ENCODE measurements at regions of chr22 and their contacts with region 1.

Region 1: DNA sequence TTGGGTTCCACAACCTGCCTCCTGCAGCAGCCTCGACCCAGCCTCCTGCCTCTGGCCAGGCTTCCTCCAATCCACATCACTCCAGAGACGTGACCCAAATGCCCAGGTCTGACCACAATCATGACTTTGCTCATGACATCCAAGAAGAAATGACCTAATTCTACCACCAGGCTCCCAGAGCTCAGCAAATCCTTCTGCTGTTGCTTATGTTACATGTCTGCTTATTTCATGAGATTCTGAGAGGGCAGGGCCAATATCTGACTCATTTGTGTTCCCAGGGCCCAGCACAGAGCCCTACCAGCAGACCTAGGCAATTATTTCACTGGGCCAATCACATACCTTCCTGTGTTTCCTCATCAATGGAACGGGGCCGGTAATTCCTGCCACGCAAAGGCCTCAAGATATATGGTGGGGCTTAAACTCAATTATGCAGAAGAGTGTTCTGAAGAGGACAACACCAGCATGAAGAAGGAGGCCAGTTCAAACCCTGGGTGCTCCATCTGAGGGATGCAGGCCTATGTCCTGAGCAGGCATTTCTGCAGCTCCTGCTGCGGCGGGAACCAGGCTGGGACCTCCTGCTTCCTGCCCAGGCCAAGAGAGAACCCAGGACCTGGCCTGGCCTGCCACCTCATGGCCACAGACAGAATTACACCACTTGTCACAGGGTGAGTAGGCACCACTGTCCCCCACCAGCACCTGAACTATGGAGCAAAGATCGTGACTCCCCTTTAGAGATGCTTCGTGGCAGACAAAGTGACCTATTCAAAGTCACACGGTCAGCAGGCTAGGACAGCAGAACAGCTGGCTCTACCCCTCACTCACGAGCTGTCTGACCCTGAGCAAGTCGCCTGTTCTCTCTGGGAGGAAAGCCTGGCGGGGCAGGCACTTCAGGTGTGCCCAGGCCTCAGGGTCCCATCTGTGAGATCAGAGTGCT is 5.9 kb downstream of the CENPM start:
- DNase-seq: peak; percentile 85 to 93 (median 90)
- H3K4me3 ChIP-seq: peak overlapping the region in 3 of 59 donors; percentile 0 to 29 (median 7)
- H3K27ac ChIP-seq: peak overlapping the region in 51 of 59 donors; percentile 2 to 83 (median 59)
- H3K27me3 ChIP-seq: no peaks in the 10 kb centered on the region
- CTCF ChIP-seq: peak; percentile 86 to 99 (median 96)

Region 2: DNA sequence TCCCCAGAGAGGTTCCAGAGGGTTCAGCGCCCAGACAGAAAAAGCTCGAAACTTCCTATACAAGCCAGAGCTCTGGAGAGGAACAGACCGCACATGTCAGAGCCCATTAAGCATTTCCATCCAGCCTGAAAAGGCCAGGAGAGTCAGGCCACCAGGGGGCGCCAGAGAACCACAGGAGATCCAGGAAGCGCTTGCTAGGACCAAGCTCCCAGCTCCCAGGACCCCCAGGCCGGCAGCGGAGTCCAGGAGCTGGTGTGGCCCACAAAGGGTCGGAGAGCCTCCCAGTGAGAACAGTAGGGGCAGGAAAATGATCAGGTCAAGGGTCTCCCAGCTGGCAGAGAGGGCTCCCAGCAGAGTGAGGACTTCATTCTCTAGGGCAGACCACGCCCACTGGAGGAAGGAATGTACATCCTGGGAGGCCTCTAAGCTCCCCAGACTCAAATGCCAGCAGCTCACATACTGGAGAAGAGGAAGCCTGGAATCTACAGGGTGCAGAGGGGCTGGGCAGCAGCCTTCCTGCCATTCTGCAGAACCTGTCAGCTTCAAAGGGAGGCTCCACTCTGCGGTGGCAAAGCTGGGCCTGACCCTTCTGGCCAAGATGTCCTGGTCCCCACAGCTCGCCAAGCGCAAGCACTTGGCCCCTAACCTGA is 243.8 kb before region 1 on chr22:
- intact Hi-C with region 1: loop called (anchors 2 to 5 kb)
- DNase-seq: peak; percentile 85 to 96 (median 92)
- H3K4me3 ChIP-seq: peak overlapping the region in 22 of 59 donors; percentile 4 to 41 (median 29)
- H3K27ac ChIP-seq: peak overlapping the region in 36 of 59 donors; percentile 4 to 82 (median 50)
- H3K27me3 ChIP-seq: no peaks in the 10 kb centered on the region
- CTCF ChIP-seq: peak; percentile 90 to 100 (median 97)

Region 3: GRCh38 chr22:41746567-41747400 is 194.3 kb before region 1 on chr22:
- intact Hi-C with region 1: loop called (anchors 2 to 5 kb)
- DNase-seq: peak; percentile 39 to 85 (median 72)
- H3K4me3 ChIP-seq: no peak overlapping the region
- H3K27ac ChIP-seq: no peak overlapping the region
- H3K27me3 ChIP-seq: peaks cover 0 to 4% (median 0%) of the 10 kb centered on the region in 45 donors
- CTCF ChIP-seq: peak; percentile 38 to 81 (median 68)

Region 4: DNA sequence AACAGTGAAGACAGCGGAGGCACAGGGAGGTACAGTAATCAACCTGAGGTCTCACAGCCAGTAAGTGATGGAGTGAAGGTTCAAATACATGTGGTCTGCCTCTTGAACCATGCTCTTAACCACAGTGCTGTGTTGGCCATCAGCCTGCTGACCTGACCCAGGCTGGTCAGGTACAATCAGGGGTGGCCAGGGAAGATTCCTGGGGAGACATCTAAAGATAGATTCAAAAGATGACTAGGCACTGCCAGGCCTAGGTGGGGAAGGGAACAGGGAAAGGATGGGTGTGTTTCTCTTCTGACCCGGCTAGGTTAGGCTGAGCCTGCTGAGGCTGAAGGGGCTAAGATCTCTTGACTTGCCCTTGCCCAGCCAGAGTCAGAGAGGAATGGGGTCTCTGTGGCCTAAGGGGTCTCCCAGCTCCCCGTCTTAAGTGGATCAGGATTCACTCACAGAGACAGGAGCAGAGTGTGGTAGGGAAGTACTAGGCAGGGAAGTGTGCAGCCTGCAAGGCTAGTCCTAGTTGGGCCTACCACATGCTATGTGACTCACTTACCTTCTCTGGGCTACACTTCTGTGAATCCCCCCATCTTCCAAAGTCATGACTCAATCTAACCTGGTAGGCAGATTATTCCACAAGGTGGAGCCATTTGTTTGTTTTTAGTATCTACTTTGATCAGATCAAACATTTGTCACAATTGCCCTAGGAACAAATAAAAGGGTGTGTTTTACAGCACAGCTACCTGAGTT is 118.6 kb before region 1 on chr22:
- intact Hi-C with region 1: loop called (anchors 1 to 2 kb)
- DNase-seq: no peak
- H3K4me3 ChIP-seq: no peak overlapping the region
- H3K27ac ChIP-seq: no peak overlapping the region
- H3K27me3 ChIP-seq: no peaks in the 10 kb centered on the region
- CTCF ChIP-seq: peak; percentile 34 to 80 (median 62)

Region 5: GRCh38 chr22:41908411-41909309 is 32.4 kb before region 1 on chr22:
- intact Hi-C with region 1: no loop called
- DNase-seq: peak in 1 of 10 donors; percentile 70
- H3K4me3 ChIP-seq: peak overlapping the region in 1 of 59 donors; percentile 63
- H3K27ac ChIP-seq: peak overlapping the region in 46 of 59 donors; percentile 15 to 88 (median 64)
- H3K27me3 ChIP-seq: peaks cover 0 to 37% (median 15%) of the 10 kb centered on the region in 45 donors
- CTCF ChIP-seq: no peak

Region 6: DNA sequence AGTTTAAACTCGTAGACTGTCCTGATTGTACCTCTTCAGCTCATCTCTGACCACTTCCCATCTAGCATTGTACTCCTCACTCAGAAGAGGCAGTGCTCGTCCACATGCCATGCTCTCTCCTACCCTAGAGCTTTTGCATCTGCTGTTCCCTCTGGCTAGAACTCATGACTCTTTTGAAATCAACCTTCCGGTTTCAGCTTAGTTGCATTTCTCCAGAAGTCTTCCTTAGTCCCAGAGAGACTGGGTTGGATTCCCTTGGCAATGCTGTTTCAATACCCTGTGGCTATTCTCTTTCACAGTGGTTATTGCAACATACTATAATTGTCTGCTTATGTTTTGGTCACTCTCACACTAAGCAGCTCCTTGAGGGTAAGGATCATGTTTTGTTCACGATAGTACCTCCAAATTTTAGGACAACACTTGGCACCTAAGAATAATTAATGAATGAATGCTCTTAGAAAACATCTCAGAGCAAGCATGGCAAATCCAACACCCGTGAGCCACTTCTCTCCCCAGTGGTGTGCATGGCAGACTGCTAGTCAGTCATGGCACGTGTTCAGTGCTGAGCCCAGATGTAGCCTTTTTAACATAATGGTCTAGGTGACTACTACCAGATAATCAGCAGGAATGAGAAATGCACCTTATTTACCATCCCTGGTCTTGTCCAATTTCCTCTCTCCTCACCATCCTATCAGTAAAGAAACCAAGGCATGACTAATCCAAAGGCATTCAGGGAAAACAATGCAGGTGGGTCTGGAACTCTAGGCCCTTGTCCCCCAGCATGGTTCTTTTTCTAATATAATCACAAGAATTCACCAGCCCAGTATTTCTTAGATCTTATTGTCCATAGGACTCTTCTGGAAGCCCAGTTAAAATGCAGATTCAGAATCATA is 42.7 kb after region 1 on chr22:
- intact Hi-C with region 1: no loop called
- DNase-seq: no peak
- H3K4me3 ChIP-seq: no peak overlapping the region
- H3K27ac ChIP-seq: no peak overlapping the region
- H3K27me3 ChIP-seq: no peaks in the 10 kb centered on the region
- CTCF ChIP-seq: no peak

Region 7: GRCh38 chr22:42151924-42152635 is 211.0 kb after region 1 on chr22:
- intact Hi-C with region 1: no loop called
- DNase-seq: no peak
- H3K4me3 ChIP-seq: no peak overlapping the region
- H3K27ac ChIP-seq: no peak overlapping the region
- H3K27me3 ChIP-seq: no peaks in the 10 kb centered on the region
- CTCF ChIP-seq: no peak

Measured in dorsolateral prefrontal cortex (tissue), 120 donors.